ENCODE measurements at regions of chr9 and their contacts with region 1.

Region 1: DNA sequence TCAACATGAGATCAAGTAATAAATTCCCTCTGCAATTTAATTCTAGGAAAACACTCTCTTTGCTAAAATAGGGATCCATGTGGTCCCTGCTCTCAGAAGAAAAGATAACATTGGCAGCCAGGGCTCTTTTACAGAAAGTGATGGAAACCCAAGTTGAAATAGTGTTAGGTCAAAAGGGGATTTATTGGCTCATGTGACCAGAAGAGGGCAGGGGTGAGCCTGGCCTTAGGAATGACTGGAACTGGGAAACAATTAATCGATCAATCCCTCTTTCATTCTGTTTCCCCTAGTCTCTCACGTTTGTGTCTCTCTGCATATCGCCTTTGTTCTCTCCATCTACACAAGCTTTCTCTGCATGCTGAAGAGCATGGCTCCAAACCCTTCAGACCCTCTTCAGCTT is 58.3 kb upstream of the ALDH1B1 start:
- DNase-seq: peak; percentile 31
- ATAC-seq: peak; percentile 75
- H3K4me3 ChIP-seq: no peak overlapping the region
- H3K27ac ChIP-seq: no peak overlapping the region
- H3K4me1 ChIP-seq: peaks cover 11% of the 10 kb centered on the region; the same call in 1 of the 2 replicates
- H3K27me3 ChIP-seq: peaks cover 1 to 20% of the 10 kb centered on the region in 2 experiments; a peak in 2 of 5 replicates
- CTCF ChIP-seq: peak; percentile 71
- EP300 ChIP-seq: no peak
- POLR2A ChIP-seq: no peak
- RAD21 ChIP-seq: peak; percentile 50

Region 2: GRCh38 chr9:38183994-38184568 is 150.2 kb before region 1 on chr9:
- CTCF ChIA-PET with region 1: no interaction called
- POLR2A ChIA-PET with region 1: no interaction called
- in situ Hi-C with region 1: no loop called
- intact Hi-C with region 1: no loop called
- DNase-seq: no peak
- ATAC-seq: no peak
- H3K4me3 ChIP-seq: no peak overlapping the region
- H3K27ac ChIP-seq: no peak overlapping the region
- H3K4me1 ChIP-seq: no peaks in the 10 kb centered on the region
- H3K27me3 ChIP-seq: peaks cover 0 to 5% of the 10 kb centered on the region in 2 experiments; a peak in 1 of 5 replicates
- CTCF ChIP-seq: no peak
- EP300 ChIP-seq: no peak
- POLR2A ChIP-seq: no peak
- RAD21 ChIP-seq: no peak

Region 3: DNA sequence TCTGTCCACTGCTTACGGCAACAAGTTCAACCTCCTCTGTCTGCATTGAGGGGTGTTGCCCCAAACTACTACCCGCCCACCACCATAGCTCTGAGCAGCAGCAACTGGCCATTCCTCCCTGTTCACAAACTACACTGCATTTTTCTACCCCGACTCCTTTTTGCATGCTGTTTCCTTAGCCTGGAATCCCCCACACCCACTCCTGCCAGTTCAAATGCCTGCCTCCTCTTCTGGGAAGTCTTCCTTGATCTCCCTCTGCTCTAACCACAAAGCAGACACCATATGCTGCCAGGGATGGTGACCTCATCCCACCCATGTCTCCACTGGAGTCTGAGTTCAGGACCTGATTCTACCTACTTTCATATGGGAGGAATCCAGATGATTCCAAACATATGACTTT is 71.6 kb after region 1 on chr9:
- CTCF ChIA-PET with region 1: interaction called, 3 read pairs
- POLR2A ChIA-PET with region 1: no interaction called
- in situ Hi-C with region 1: no loop called
- intact Hi-C with region 1: loop called (anchors 1 kb)
- DNase-seq: no peak
- ATAC-seq: no peak
- H3K4me3 ChIP-seq: no peak overlapping the region
- H3K27ac ChIP-seq: no peak overlapping the region
- H3K4me1 ChIP-seq: peaks cover 14% of the 10 kb centered on the region
- H3K27me3 ChIP-seq: peaks cover 8 to 34% of the 10 kb centered on the region in 2 experiments; a peak in 4 of 5 replicates
- CTCF ChIP-seq: no peak
- EP300 ChIP-seq: no peak
- POLR2A ChIP-seq: no peak
- RAD21 ChIP-seq: no peak

Measured in HepG2 (cell line).